Activated B cell treated with CpG ODN at 0.5 μM for 24 hours (primary cell): ENCODE measurements at regions of chr10 and their contacts with region 1.

Region 1: GRCh38 chr10:88091490-88092105 is 228.2 kb downstream of the PTEN start:
- DNase-seq: no peak
- ATAC-seq: peak; percentile 87
- H3K4me3 Mint-ChIP-seq: peak overlapping the region; percentile 11
- H3K27ac Mint-ChIP-seq: peak overlapping the region; percentile 81
- H3K4me1 Mint-ChIP-seq: peaks cover 37% of the 10 kb centered on the region
- H3K27me3 Mint-ChIP-seq: no peaks in the 10 kb centered on the region
- CTCF ChIP-seq: no peak

Region 2: GRCh38 chr10:88070080-88070880 is 21.3 kb before region 1 on chr10:
- CTCF ChIA-PET with region 1: interaction called, 5 read pairs
- POLR2A ChIA-PET with region 1: interaction called, 35 read pairs
- intact Hi-C with region 1: loop called (anchors 1 kb)
- DNase-seq: no peak
- ATAC-seq: peak; percentile 81
- H3K4me3 Mint-ChIP-seq: peak overlapping the region; percentile 69
- H3K27ac Mint-ChIP-seq: peak overlapping the region; percentile 91
- H3K4me1 Mint-ChIP-seq: peaks cover 84% of the 10 kb centered on the region
- H3K27me3 Mint-ChIP-seq: no peaks in the 10 kb centered on the region
- CTCF ChIP-seq: no peak

Region 3: GRCh38 chr10:88080213-88080612 is 11.4 kb before region 1 on chr10:
- CTCF ChIA-PET with region 1: interaction called, 4 read pairs
- POLR2A ChIA-PET with region 1: interaction called, 11 read pairs
- intact Hi-C with region 1: no loop called
- DNase-seq: no peak
- ATAC-seq: no peak
- H3K4me3 Mint-ChIP-seq: peak overlapping the region; percentile 48
- H3K27ac Mint-ChIP-seq: peak overlapping the region; percentile 54
- H3K4me1 Mint-ChIP-seq: peaks cover 62% of the 10 kb centered on the region
- H3K27me3 Mint-ChIP-seq: no peaks in the 10 kb centered on the region
- CTCF ChIP-seq: no peak